Naive thymus-derived CD4-positive, alpha-beta T cell (primary cell): ENCODE measurements at regions of chr4 and their contacts with region 1.

Region 1: GRCh38 chr4:142567199-142567598 is 278.9 kb downstream of the INPP4B start:
- DNase-seq: peak; percentile 7 to 75 (median 67)
- ATAC-seq: peak; percentile 82
- H3K4me3 ChIP-seq: peak overlapping the region; percentile 59
- H3K4me3 Mint-ChIP-seq: peak overlapping the region; percentile 82 to 98 (median 93)
- H3K27ac ChIP-seq: peak overlapping the region; percentile 84
- H3K27ac Mint-ChIP-seq: peak overlapping the region; percentile 92 to 99 (median 96)
- H3K4me1 ChIP-seq: peaks cover 10 to 45% of the 10 kb centered on the region in 2 donors
- H3K4me1 Mint-ChIP-seq: peaks cover 5 to 80% (median 66%) of the 10 kb centered on the region in 7 donors
- H3K27me3 ChIP-seq: no peaks in the 10 kb centered on the region
- H3K27me3 Mint-ChIP-seq: no peaks in the 10 kb centered on the region

Region 2: DNA sequence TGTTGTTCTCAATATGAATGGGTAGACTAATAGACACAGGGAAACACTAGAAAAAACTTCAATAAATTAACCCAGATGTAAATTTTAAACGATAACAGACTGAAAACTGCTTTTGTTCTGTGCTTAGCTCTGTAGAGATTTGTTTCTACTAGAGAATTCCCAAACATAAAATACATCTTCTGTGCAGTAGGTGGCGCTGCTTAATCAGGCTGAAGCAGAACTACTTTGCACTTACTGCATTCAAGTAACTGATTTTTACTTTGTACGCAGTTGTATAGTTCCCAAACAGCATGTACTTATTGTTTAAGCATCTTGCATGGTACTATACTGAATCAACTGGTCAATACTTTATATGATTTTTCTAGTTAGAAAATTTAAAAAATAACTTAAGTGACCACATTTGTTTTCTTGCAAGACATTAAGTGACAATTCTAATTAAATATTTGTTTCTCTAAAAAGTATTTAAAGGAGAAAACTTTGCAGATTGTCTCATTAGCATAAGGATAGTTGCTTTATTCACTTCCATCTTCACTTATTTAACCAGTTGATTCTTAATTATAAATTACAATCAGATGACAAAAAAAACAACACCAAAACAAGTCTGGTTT is 440.2 kb before region 1 on chr4:
- CTCF ChIA-PET with region 1: no interaction called
- POLR2A ChIA-PET with region 1: no interaction called
- intact Hi-C with region 1: loop called (anchors 1 to 2 kb)
- DNase-seq: peak in 8 of 9 donors; percentile 30 to 73 (median 66)
- ATAC-seq: peak; percentile 83
- H3K4me3 ChIP-seq: no peak overlapping the region
- H3K4me3 Mint-ChIP-seq: no peak overlapping the region
- H3K27ac ChIP-seq: no peak overlapping the region
- H3K27ac Mint-ChIP-seq: peak overlapping the region in 1 of 9 donors; percentile 22
- H3K4me1 ChIP-seq: peaks cover 0 to 32% of the 10 kb centered on the region in 2 donors
- H3K4me1 Mint-ChIP-seq: peaks cover 10 to 38% (median 37%) of the 10 kb centered on the region in 7 donors
- H3K27me3 ChIP-seq: no peaks in the 10 kb centered on the region
- H3K27me3 Mint-ChIP-seq: no peaks in the 10 kb centered on the region

Region 3: GRCh38 chr4:142347241-142347640 is 220.0 kb before region 1 on chr4:
- CTCF ChIA-PET with region 1: interaction called, 22 read pairs
- POLR2A ChIA-PET with region 1: interaction called, 12 read pairs
- intact Hi-C with region 1: no loop called
- DNase-seq: no peak
- ATAC-seq: no peak
- H3K4me3 ChIP-seq: peak overlapping the region; percentile 3
- H3K4me3 Mint-ChIP-seq: peak overlapping the region in 9 of 10 donors; percentile 45 to 85 (median 75)
- H3K27ac ChIP-seq: no peak overlapping the region
- H3K27ac Mint-ChIP-seq: peak overlapping the region in 6 of 9 donors; percentile 43 to 94 (median 84)
- H3K4me1 ChIP-seq: peaks cover 36 to 67% of the 10 kb centered on the region in 2 donors
- H3K4me1 Mint-ChIP-seq: peaks cover 41 to 99% (median 93%) of the 10 kb centered on the region in 7 donors
- H3K27me3 ChIP-seq: no peaks in the 10 kb centered on the region
- H3K27me3 Mint-ChIP-seq: no peaks in the 10 kb centered on the region

Region 4: GRCh38 chr4:142405021-142405694 is 162.0 kb before region 1 on chr4:
- CTCF ChIA-PET with region 1: interaction called, 6 read pairs
- POLR2A ChIA-PET with region 1: interaction called, 17 read pairs
- intact Hi-C with region 1: loop called (anchors 1 kb)
- DNase-seq: peak; percentile 19 to 66 (median 60)
- ATAC-seq: peak; percentile 72
- H3K4me3 ChIP-seq: peak overlapping the region; percentile 95
- H3K4me3 Mint-ChIP-seq: peak overlapping the region; percentile 92 to 100 (median 99)
- H3K27ac ChIP-seq: peak overlapping the region; percentile 82
- H3K27ac Mint-ChIP-seq: peak overlapping the region; percentile 86 to 100 (median 96)
- H3K4me1 ChIP-seq: peaks cover 26 to 48% of the 10 kb centered on the region in 2 donors
- H3K4me1 Mint-ChIP-seq: peaks cover 22 to 80% (median 69%) of the 10 kb centered on the region in 7 donors
- H3K27me3 ChIP-seq: no peaks in the 10 kb centered on the region
- H3K27me3 Mint-ChIP-seq: no peaks in the 10 kb centered on the region

Region 5: DNA sequence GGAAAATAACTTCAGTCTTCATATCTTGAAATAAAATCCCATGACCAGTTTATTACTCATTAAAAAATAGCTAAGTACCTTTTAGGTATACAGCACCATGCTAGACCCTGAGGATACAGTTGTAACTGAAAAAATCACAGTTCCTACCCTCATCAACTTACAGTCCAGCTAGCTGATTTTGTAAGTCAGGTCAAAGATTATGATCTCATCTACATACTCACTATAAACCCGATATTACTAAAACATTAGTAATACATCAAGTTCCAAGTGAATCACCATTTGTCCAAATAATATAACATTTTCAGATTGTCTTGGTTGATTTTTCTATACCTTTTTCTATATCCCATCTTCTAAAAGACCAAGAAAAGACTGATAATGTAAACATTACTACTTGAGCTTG is 55.0 kb before region 1 on chr4:
- CTCF ChIA-PET with region 1: no interaction called
- POLR2A ChIA-PET with region 1: no interaction called
- intact Hi-C with region 1: no loop called
- DNase-seq: no peak
- ATAC-seq: no peak
- H3K4me3 ChIP-seq: no peak overlapping the region
- H3K4me3 Mint-ChIP-seq: no peak overlapping the region
- H3K27ac ChIP-seq: no peak overlapping the region
- H3K27ac Mint-ChIP-seq: no peak overlapping the region
- H3K4me1 ChIP-seq: no peaks in the 10 kb centered on the region
- H3K4me1 Mint-ChIP-seq: no peaks in the 10 kb centered on the region
- H3K27me3 ChIP-seq: no peaks in the 10 kb centered on the region
- H3K27me3 Mint-ChIP-seq: no peaks in the 10 kb centered on the region

Region 6: DNA sequence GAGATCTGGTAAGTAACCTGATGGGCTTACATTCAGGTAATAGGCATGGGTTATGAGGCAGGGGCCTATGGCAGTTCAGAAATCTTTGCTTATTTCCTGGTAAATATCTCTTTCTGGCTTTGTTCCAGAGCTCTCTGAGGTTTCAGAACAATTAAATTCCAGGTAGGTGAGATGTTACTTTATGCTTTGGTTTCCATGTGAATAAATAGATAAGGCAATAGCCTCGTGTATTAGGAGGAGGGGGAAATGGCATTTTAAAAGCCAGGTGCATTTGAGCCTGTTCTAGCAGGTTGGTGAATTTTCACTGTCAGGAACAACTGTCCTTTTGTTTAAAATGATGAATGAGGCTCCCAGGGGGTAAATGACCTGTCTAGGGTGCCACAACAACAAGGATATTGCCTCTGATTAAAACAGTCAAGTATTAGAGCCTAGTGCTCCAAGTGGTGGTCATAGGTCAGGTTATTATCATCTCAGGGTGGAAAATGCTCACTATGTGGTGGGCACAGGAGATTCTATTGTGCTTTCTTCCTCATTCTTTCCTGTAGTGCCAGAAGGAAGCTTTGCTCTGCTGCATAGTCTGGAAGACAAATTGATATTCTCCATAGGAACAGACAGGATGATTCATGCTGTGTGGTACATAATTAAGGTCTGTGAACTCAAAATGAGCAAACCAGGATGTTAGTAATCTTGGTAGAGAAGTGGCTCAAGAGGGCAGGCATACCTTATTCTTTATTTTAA is 17.3 kb before region 1 on chr4:
- CTCF ChIA-PET with region 1: interaction called, 9 read pairs
- POLR2A ChIA-PET with region 1: interaction called, 55 read pairs
- intact Hi-C with region 1: loop called in 1 of 2 experiments (anchors 2 kb)
- DNase-seq: no peak
- ATAC-seq: peak; percentile 18
- H3K4me3 ChIP-seq: no peak overlapping the region
- H3K4me3 Mint-ChIP-seq: peak overlapping the region in 7 of 10 donors; percentile 6 to 43 (median 33)
- H3K27ac ChIP-seq: no peak overlapping the region
- H3K27ac Mint-ChIP-seq: peak overlapping the region in 6 of 9 donors; percentile 7 to 95 (median 40)
- H3K4me1 ChIP-seq: peaks cover 0 to 36% of the 10 kb centered on the region in 2 donors
- H3K4me1 Mint-ChIP-seq: peaks cover 22 to 70% (median 58%) of the 10 kb centered on the region in 7 donors
- H3K27me3 ChIP-seq: no peaks in the 10 kb centered on the region
- H3K27me3 Mint-ChIP-seq: no peaks in the 10 kb centered on the region

Region 7: DNA sequence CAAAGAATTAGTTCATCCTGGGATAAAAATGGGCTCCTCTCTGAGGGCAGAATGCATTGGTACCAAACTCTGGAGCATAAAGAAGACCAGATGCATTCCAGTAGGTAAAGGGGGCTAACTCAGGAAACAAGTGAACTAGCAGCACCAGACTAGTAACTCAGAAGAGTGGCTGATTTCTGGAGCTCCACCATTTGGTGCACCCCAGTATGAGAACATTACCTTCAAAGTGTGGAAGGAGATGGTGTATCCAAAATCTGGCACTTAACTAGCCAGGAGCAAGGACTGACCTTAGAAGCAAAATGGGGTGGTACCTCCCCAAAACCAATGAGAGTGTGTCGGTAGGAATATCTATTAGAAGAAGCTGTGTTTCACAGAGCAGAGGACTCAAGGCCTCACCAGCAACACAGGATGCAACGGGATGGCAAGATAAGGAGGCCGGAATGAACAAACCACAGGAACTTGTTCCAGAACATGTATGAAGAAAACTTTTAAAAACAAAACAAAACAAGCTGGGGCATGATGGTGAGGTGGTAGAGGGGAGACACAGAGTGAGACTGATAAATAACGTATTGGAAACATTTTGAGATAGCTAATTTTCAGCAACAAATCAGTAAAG is 136.6 kb after region 1 on chr4:
- CTCF ChIA-PET with region 1: interaction called, 5 read pairs
- POLR2A ChIA-PET with region 1: interaction called, 19 read pairs
- intact Hi-C with region 1: loop called (anchors 1 to 2 kb)
- DNase-seq: peak in 7 of 9 donors; percentile 51 to 71 (median 58)
- ATAC-seq: peak; percentile 76
- H3K4me3 ChIP-seq: peak overlapping the region; percentile 14
- H3K4me3 Mint-ChIP-seq: no peak overlapping the region
- H3K27ac ChIP-seq: peak overlapping the region; percentile 54
- H3K27ac Mint-ChIP-seq: no peak overlapping the region
- H3K4me1 ChIP-seq: peaks cover 51 to 94% of the 10 kb centered on the region in 2 donors
- H3K4me1 Mint-ChIP-seq: peaks cover 20 to 35% (median 32%) of the 10 kb centered on the region in 7 donors
- H3K27me3 ChIP-seq: no peaks in the 10 kb centered on the region
- H3K27me3 Mint-ChIP-seq: no peaks in the 10 kb centered on the region

Region 8: DNA sequence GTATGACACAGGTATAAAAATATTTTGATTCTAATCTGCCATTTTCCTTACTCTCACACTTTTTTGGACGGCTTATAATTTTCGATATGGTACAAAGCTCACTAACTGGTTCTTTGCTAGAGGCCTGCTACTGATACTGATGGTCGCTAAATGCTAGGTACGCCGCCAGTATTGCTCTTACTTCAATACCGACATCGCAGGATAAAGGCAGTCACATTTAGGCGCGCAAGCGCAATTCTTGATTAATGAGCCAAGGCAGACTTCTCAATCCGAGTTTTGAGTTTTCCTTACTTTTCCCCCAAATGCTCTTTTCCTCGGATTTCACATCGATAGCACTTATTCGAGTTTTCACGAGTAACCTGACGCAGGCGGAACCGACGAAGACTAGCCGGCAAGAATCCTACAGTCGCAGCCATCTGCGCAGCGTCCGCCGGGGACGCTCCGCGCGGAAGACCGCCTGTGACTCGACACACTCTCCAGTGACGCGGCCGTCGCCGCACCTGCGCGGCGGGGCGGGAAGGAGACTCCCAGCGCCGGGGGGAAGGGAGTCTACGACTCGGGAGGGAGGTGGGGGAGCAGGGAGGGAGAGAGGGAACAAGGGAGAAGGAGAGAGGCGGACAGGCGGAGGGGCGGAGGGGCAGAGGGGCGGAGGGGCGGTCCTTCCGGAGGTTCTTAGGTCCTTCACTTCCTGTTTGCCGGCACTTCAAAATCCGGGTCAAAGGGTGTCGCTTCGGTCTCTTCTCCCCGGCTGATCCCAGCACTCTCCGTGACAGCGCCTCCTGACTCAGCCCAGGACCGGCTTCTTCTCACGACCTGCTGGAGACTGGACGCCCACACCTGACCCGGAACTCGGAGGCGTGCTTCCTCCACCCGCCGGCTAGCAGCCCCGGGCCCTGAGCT is 617.3 kb after region 1 on chr4 and contains the start of gene USP38:
- CTCF ChIA-PET with region 1: no interaction called
- POLR2A ChIA-PET with region 1: no interaction called
- intact Hi-C with region 1: loop called in 1 of 2 experiments (anchors 2 kb)
- DNase-seq: peak; percentile 74 to 90 (median 85)
- ATAC-seq: peak; percentile 91
- H3K4me3 ChIP-seq: peak within 1 kb of the TSS; percentile 78
- H3K4me3 Mint-ChIP-seq: peak within 1 kb of the TSS; percentile 78 to 99 (median 94)
- H3K27ac ChIP-seq: peak within 1 kb of the TSS; percentile 96
- H3K27ac Mint-ChIP-seq: peak within 1 kb of the TSS; percentile 93 to 99 (median 97)
- H3K4me1 ChIP-seq: peaks cover 27% of the 10 kb centered on the region in 2 donors
- H3K4me1 Mint-ChIP-seq: peaks cover 41 to 82% (median 70%) of the 10 kb centered on the region in 7 donors
- H3K27me3 ChIP-seq: no peaks in the 10 kb centered on the region
- H3K27me3 Mint-ChIP-seq: no peaks in the 10 kb centered on the region
- total RNA-seq, gene USP38: 22.4 to 28.8 (median 24.3) TPM